ENCODE measurements at regions of chr6 and their contacts with region 1.

Region 1: DNA sequence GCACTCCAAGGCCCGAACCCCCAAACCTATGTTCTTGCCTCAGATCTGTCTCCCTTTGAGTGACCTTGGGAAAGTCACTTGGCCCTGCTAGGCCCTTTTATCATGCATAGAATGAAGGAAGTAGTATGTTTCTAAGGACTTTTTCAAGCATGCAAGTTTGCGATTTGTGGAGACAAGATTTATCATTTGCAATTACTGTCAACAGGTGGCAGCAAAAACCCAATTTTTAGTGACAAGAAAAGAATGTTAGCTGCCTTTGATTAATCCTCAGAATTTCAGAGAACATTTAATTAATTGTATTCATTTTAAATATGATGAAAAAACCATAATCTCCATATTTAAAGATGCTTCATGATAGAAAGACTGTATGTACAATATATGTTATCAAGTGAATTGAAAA is 28.3 kb upstream of the PREP start:
- DNase-seq: no peak
- ATAC-seq: peak; percentile 65
- H3K4me3 ChIP-seq: no peak overlapping the region
- H3K27ac ChIP-seq: no peak overlapping the region
- H3K4me1 ChIP-seq: peaks cover 3% of the 10 kb centered on the region
- H3K27me3 ChIP-seq: no peaks in the 10 kb centered on the region
- CTCF ChIP-seq: peak; percentile 47 to 58 (median 57); a peak in 5 of 6 replicates
- EP300 ChIP-seq: no peak
- POLR2A ChIP-seq: no peak
- RAD21 ChIP-seq: peak; percentile 81

Region 2: GRCh38 chr6:105045526-105045925 is 385.7 kb before region 1 on chr6:
- CTCF ChIA-PET with region 1: no interaction called
- POLR2A ChIA-PET with region 1: no interaction called
- RAD21 ChIA-PET with region 1: no interaction called
- SMC1A ChIA-PET with region 1: no interaction called
- in situ Hi-C with region 1: no loop called
- intact Hi-C with region 1: no loop called
- DNase-seq: no peak
- ATAC-seq: no peak
- H3K4me3 ChIP-seq: no peak overlapping the region
- H3K27ac ChIP-seq: no peak overlapping the region
- H3K4me1 ChIP-seq: no peaks in the 10 kb centered on the region
- H3K27me3 ChIP-seq: no peaks in the 10 kb centered on the region
- CTCF ChIP-seq: no peak
- EP300 ChIP-seq: no peak
- POLR2A ChIP-seq: no peak
- RAD21 ChIP-seq: no peak

Region 3: GRCh38 chr6:105087571-105088211 is 343.5 kb before region 1 on chr6:
- CTCF ChIA-PET with region 1: interaction called, 39 read pairs
- POLR2A ChIA-PET with region 1: no interaction called
- RAD21 ChIA-PET with region 1: interaction called, 7 read pairs
- SMC1A ChIA-PET with region 1: interaction called, 10 read pairs
- in situ Hi-C with region 1: loop called (anchors 5 kb)
- intact Hi-C with region 1: no loop called
- DNase-seq: peak; percentile 17
- ATAC-seq: peak; percentile 82
- H3K4me3 ChIP-seq: no peak overlapping the region
- H3K27ac ChIP-seq: no peak overlapping the region
- H3K4me1 ChIP-seq: no peaks in the 10 kb centered on the region
- H3K27me3 ChIP-seq: no peaks in the 10 kb centered on the region
- CTCF ChIP-seq: peak; percentile 71 to 87 (median 77); a peak in 5 of 6 replicates
- EP300 ChIP-seq: no peak
- POLR2A ChIP-seq: no peak
- RAD21 ChIP-seq: peak; percentile 92

Region 4: DNA sequence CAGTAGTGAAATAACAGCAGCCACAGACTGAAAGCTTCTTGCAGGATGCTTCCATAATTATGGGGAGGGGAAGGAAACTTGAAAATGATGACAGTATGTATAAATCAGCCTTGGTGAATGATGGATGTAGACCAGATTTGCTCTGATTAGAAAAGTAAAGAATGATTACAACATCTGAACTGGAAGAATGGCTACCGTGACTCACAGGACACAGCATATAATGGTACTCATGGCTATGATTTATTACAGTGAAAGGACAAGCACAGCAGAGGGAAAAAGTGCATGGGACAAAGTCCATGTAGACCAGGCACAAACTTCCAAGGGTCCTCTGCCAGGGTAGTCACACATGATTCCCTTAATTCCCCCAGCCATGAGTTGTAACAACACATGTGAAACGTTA is 180.7 kb before region 1 on chr6:
- CTCF ChIA-PET with region 1: no interaction called
- POLR2A ChIA-PET with region 1: no interaction called
- RAD21 ChIA-PET with region 1: no interaction called
- SMC1A ChIA-PET with region 1: no interaction called
- in situ Hi-C with region 1: no loop called
- intact Hi-C with region 1: no loop called
- DNase-seq: no peak
- ATAC-seq: no peak
- H3K4me3 ChIP-seq: no peak overlapping the region
- H3K27ac ChIP-seq: no peak overlapping the region
- H3K4me1 ChIP-seq: no peaks in the 10 kb centered on the region
- H3K27me3 ChIP-seq: no peaks in the 10 kb centered on the region
- CTCF ChIP-seq: no peak
- EP300 ChIP-seq: no peak
- POLR2A ChIP-seq: no peak
- RAD21 ChIP-seq: no peak

Region 5: DNA sequence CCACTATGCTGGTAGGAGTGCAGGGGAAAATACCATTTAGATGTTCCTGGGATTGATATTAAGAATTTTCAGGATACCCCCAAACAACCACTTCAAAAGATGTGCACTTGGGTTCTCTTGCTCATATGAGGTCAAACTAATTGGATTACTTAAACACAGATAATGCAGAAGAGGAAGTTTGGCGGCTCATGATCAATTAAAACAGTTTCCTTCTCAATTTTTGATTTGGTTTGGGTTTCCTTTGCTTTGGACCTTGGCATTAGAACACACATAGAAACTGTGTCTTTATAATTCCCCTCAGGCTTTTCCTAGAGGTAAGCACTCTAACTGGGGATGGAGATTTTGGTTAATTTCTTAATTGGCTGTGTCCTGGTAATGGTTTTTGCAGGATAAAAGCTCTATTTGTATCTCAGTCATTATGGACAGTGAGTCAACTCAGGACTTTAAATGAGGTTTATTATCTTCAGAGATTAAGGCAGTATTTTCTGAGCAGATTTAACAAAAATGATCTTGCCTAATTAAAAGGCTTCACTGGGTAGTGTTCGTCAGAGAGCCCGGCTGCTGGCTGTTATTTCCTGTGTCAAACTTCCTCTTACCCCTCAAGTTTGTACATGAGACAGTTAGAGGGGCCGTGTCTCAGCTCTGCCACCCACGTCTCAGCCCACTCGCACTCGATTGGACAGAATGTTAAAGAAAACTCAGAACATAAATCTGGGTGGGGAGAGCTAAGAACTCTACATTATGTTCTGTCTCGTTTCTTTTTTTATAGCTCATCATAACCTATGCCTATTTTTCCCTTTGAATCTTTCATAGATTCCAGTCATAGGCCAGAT is 21.9 kb after region 1 on chr6:
- CTCF ChIA-PET with region 1: interaction called, 91 read pairs
- POLR2A ChIA-PET with region 1: interaction called, 13 read pairs
- RAD21 ChIA-PET with region 1: interaction called, 99 read pairs
- SMC1A ChIA-PET with region 1: interaction called, 89 read pairs
- in situ Hi-C with region 1: no loop called
- intact Hi-C with region 1: no loop called
- DNase-seq: peak; percentile 54
- ATAC-seq: peak; percentile 89
- H3K4me3 ChIP-seq: no peak overlapping the region
- H3K27ac ChIP-seq: peak overlapping the region; percentile 35
- H3K4me1 ChIP-seq: peaks cover 15% of the 10 kb centered on the region
- H3K27me3 ChIP-seq: no peaks in the 10 kb centered on the region
- CTCF ChIP-seq: no peak
- EP300 ChIP-seq: peak; percentile 49 to 63; a peak in 3 of 4 replicates
- POLR2A ChIP-seq: no peak
- RAD21 ChIP-seq: no peak

Region 6: DNA sequence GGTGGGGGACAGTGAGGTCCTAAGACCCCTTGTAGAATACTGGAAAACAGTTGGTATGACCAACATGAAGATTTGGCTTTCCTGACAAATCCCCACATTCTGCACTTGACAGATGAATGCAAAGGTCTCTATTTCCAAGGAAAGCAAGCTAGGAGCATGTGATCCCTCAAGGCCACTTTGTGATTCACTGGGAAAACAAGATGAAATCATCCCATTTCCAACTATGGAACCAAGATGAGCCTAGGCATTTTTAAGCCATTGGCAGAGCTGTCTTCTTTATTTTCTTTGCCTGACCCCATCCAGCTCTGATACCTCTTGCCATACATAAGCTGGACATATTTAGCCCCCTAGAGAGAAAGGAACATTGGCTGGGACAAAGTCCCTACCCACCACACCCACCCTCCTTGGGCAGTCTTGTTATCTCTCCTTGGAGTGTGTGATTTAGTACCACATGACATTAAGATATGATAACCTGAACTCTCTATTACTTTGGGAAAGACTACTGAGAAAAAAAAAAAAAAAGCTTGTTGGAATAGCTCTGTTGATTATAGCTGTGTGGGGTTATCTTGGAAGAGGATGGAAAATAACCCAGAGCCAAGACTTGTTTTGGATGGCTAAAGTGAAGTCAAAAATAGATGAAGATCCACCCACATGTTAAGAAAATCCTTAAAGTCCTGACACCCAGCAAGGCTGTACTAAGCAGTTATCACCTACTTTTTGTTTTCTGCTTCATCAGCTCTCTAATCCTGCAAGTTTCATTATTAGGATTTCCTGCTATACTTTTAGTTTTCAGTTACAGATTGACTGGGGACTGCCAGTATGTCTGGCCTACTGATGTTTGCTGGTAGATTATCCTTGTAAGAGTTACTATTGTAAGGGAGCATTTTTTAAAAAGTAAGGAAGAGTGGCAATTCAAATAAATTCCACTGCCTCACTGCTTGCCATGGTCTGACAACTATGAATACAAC is 61.8 kb after region 1 on chr6:
- CTCF ChIA-PET with region 1: interaction called, 112 read pairs
- POLR2A ChIA-PET with region 1: no interaction called
- RAD21 ChIA-PET with region 1: interaction called, 18 read pairs
- SMC1A ChIA-PET with region 1: interaction called, 8 read pairs
- in situ Hi-C with region 1: no loop called
- intact Hi-C with region 1: no loop called
- DNase-seq: no peak
- ATAC-seq: peak; percentile 83
- H3K4me3 ChIP-seq: no peak overlapping the region
- H3K27ac ChIP-seq: peak overlapping the region; percentile 27
- H3K4me1 ChIP-seq: peaks cover 47% of the 10 kb centered on the region
- H3K27me3 ChIP-seq: no peaks in the 10 kb centered on the region
- CTCF ChIP-seq: no peak
- EP300 ChIP-seq: no peak; a peak in 1 of 4 replicates
- POLR2A ChIP-seq: no peak
- RAD21 ChIP-seq: no peak

Region 7: GRCh38 chr6:105786890-105787655 is 355.8 kb after region 1 on chr6:
- CTCF ChIA-PET with region 1: interaction called, 3 read pairs
- POLR2A ChIA-PET with region 1: no interaction called
- RAD21 ChIA-PET with region 1: interaction called, 3 read pairs
- SMC1A ChIA-PET with region 1: interaction called, 5 read pairs
- in situ Hi-C with region 1: no loop called
- intact Hi-C with region 1: loop called (anchors 5 kb)
- DNase-seq: peak; percentile 74
- ATAC-seq: peak; percentile 77
- H3K4me3 ChIP-seq: no peak overlapping the region
- H3K27ac ChIP-seq: no peak overlapping the region
- H3K4me1 ChIP-seq: peaks cover 33% of the 10 kb centered on the region
- H3K27me3 ChIP-seq: no peaks in the 10 kb centered on the region
- CTCF ChIP-seq: no peak
- EP300 ChIP-seq: 0 out of 4 replicates have a peak, but pooled peaks of 1 of the 2 experiments have one; percentile 30
- POLR2A ChIP-seq: no peak
- RAD21 ChIP-seq: no peak

Region 8: DNA sequence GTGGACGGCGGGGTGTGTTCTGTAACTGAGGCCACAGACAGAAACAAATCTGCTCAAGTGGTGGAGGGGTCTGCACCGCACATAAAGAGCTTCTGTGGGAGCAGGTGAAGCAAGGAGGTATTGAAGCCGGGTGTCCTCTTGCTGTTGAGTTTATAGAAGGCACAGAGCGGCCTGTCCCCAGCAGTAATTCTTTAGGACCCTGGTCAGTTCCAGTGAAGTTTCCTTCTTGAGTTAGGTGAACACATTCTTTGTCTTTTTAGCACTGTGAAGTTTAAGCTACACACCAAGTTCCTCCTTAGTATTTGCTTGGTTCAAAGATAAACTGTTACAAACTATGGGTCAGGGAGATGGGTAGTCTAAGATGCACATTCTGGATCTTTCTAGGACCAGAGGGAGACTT is 661.1 kb after region 1 on chr6:
- CTCF ChIA-PET with region 1: interaction called, 44 read pairs
- POLR2A ChIA-PET with region 1: interaction called, 3 read pairs
- RAD21 ChIA-PET with region 1: interaction called, 37 read pairs
- SMC1A ChIA-PET with region 1: interaction called, 27 read pairs
- in situ Hi-C with region 1: loop called (anchors 10 kb)
- intact Hi-C with region 1: no loop called
- DNase-seq: no peak
- ATAC-seq: no peak
- H3K4me3 ChIP-seq: no peak overlapping the region
- H3K27ac ChIP-seq: no peak overlapping the region
- H3K4me1 ChIP-seq: peaks cover 10% of the 10 kb centered on the region; the same call in 1 of the 2 replicates
- H3K27me3 ChIP-seq: no peaks in the 10 kb centered on the region; a peak in 2 of 4 replicates
- CTCF ChIP-seq: no peak
- EP300 ChIP-seq: no peak
- POLR2A ChIP-seq: no peak
- RAD21 ChIP-seq: no peak

Region 9: GRCh38 chr6:106339334-106340029 is 908.3 kb after region 1 on chr6:
- CTCF ChIA-PET with region 1: interaction called, 15 read pairs
- POLR2A ChIA-PET with region 1: no interaction called
- RAD21 ChIA-PET with region 1: no interaction called
- SMC1A ChIA-PET with region 1: interaction called, 4 read pairs
- in situ Hi-C with region 1: no loop called
- intact Hi-C with region 1: no loop called
- DNase-seq: no peak
- ATAC-seq: peak; percentile 94
- H3K4me3 ChIP-seq: no peak overlapping the region
- H3K27ac ChIP-seq: no peak overlapping the region
- H3K4me1 ChIP-seq: no peaks in the 10 kb centered on the region
- H3K27me3 ChIP-seq: no peaks in the 10 kb centered on the region
- CTCF ChIP-seq: peak; percentile 68 to 77 (median 73)
- EP300 ChIP-seq: no peak
- POLR2A ChIP-seq: no peak
- RAD21 ChIP-seq: peak; percentile 57

Measured in GM12878 (cell line).